Heart right ventricle (tissue), 16 donors: ENCODE measurements at regions of chr3 and their contacts with region 1.

Region 1: DNA sequence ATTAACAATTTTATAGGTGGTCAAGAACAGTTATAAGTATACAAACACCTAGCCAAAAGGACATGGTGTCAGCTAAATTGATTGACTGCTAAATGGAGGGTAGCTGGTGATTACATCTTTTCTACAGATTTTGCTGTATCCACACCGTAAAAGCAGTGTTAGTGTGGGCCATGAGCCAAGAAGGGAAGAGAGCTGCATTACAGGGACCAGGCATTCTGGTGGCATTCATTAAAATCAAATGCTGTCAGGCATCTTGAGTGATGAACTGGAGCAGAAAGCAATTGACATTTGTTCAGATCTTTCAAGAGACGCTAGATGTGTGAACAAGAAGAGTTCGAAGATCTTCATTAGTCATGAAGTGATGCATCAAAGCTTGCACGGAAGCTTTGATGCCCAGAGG is 177.9 kb downstream of the ARPP21 start:
- DNase-seq: no peak
- ATAC-seq: no peak
- H3K4me3 ChIP-seq: no peak overlapping the region
- H3K27ac ChIP-seq: no peak overlapping the region
- H3K4me1 ChIP-seq: no peaks in the 10 kb centered on the region
- H3K27me3 ChIP-seq: no peaks in the 10 kb centered on the region
- CTCF ChIP-seq: no peak

Region 2: GRCh38 chr3:35639254-35640186 is 177.7 kb before region 1 on chr3 and contains the start of gene ARPP21:
- intact Hi-C with region 1: no loop called
- DNase-seq: no peak
- ATAC-seq: peak in 2 of 8 donors; percentile 53 to 72
- H3K4me3 ChIP-seq: peak within 1 kb of the TSS; percentile 6 to 47 (median 32)
- H3K27ac ChIP-seq: no peak within 1 kb of the TSS
- H3K4me1 ChIP-seq: peaks cover 0 to 13% (median 10%) of the 10 kb centered on the region in 9 donors
- H3K27me3 ChIP-seq: peaks cover 9 to 68% (median 39%) of the 10 kb centered on the region in 7 donors
- CTCF ChIP-seq: no peak
- total RNA-seq, gene ARPP21: not detected

Region 3: DNA sequence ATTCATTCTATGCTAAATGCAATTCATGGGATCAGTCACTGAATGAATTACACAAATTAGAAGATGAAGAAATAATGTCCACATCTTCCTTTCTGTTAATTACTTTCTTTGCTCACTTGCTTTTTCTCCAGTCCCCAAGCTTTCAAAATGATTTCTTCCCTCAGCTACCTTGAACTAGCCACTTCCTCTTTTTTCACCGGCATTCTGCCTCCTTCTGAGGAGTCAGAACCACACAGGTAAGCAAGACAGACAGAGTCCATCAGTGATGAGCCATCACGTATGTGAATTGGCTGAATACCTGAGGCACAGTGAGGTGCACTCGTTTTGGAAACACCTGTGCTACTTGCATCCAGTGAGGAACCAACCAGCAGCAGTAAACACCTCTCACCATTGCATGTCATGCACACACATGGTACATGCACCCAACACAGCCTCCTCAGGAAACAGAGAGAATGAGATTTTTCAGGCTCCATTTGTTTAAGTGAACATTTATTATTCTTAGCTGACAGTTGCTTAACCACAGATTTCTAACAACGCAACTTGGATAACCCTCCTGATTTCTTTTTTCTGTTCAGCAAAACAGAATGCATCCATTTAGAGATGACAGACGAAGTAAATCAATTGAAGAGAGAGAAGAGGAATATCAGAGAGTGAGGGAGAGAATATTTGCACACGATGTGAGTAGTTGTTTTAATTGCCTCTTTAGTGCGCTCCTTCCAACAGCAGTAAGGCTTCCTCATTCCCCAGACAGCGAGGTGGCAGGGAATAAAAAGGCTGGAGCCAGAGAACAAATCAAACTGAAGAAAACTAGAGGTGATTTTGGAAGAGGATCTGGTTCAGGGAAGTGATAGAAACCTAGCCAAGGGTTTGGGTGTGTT is 108.6 kb before region 1 on chr3:
- intact Hi-C with region 1: no loop called
- DNase-seq: no peak
- ATAC-seq: no peak
- H3K4me3 ChIP-seq: no peak overlapping the region
- H3K27ac ChIP-seq: no peak overlapping the region
- H3K4me1 ChIP-seq: no peaks in the 10 kb centered on the region
- H3K27me3 ChIP-seq: peaks cover 0 to 4% (median 0%) of the 10 kb centered on the region in 7 donors
- CTCF ChIP-seq: no peak

Region 4: DNA sequence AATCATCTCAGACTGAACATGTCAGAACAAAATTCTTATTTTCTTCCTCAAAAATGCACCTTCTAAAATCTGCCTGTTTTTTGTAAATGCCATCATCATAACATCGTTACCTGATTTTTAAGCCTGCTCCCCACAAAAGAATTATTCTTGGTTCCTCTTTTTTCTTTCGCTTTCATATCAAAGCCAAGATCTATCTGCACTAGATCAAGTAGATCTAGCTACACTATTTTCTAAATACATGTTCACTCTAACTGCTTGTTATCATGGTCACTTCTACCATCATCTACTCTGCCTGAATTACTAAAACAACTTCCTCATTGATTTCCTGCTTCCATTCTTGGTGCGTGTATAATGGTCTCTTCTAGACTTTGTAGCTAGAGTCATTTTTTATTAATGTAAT is 39.8 kb after region 1 on chr3:
- intact Hi-C with region 1: loop called in 1 of 10 experiments (anchors 2 kb)
- DNase-seq: no peak
- ATAC-seq: no peak
- H3K4me3 ChIP-seq: no peak overlapping the region
- H3K27ac ChIP-seq: no peak overlapping the region
- H3K4me1 ChIP-seq: no peaks in the 10 kb centered on the region
- H3K27me3 ChIP-seq: no peaks in the 10 kb centered on the region
- CTCF ChIP-seq: no peak